ENCODE measurements at regions of chr12 and their contacts with region 1.

Region 1: DNA sequence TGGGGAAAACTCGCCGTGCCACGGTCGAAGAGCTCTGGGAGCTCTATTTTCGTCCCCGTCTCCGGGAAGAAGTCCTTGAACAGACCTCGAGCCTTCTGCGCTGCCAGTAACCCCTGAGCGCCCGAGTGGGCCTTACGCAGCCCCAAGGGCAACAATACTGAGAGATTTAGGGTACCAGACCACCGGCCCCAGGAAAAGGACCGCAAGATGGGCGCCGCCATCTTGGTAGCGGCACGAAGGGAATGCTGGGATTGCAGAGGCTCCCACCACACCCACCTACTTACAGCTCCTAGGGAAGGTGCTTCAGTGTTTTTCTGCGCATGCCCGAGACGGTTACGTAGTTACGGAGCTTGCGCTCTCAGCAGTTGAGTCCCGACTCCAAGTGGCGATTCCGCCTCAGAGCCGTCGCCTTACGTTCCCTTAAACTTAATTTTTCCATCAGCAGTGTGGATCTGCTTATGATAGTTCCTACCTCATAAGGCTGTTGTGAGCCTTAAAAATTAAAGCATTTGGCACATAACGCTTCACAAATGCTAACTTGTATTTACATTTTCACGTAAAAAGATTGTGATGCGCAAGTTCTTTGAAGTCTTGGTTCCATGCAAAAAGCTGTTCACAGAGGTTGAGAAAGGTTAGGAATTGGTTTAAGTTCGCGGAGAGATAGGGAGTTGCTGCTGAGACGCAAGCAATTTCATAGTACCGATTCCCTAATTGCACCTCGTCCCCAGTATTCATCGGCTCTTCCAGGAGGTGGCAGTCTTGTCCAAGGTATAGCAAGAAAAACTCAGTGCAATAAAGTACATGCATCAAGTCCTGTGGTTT is at the start of gene YARS2:
- DNase-seq: peak; percentile 83
- CTCF ChIP-seq: peak; percentile 82

Region 2: GRCh38 chr12:32455607-32456071 is 300.2 kb before region 1 on chr12:
- in situ Hi-C with region 1: loop called (anchors 10 kb)
- DNase-seq: peak; percentile 49
- CTCF ChIP-seq: peak; percentile 57

Region 3: DNA sequence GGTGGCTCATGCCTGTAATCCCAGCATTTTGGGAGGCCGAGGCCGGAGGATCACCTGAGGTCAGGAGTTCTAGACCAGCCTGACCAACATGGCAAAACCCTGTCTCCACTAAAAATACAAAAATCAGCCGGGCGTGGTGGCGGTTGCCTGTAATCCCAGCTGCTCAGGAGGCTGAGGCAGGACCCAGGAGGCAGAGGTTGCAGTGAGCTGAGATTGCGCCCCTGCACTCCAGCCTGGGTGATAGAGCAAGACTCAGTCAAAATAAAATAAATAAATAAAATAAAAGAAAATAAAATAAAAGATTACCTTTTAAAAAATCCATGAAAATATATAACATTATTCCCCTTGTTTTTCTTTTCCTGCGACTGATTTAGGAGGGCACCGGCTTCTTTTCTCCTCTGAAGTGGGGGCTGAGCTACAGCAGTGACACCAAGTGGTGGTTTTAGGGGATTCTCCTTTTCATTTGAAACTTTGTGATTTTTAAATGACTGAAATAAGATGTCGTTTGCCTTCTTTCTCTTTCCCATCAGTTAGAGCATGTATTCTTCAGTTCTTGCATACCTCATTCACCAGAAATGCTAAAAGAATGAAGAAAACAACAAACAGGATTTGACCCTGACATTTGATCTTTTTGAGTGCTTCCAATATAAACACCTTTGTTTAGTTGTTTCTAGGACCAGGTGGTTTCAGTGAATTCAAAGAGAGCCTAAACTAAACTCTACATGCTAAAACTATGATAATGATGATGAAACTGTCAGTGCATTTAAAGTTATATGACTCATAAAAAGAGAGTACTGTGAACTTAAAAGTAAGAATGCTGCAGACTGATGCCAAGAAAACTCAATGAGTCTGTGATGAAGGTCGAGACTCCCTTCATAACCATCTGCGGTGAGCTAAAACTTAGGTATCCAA is 163.3 kb after region 1 on chr12:
- in situ Hi-C with region 1: loop called (anchors 25 kb)
- DNase-seq: no peak
- CTCF ChIP-seq: peak; percentile 49

Region 4: GRCh38 chr12:34022079-34022830 is 1266.4 kb after region 1 on chr12 and contains the start of gene ALG10:
- in situ Hi-C with region 1: loop called (anchors 10 kb)
- DNase-seq: peak; percentile 73
- CTCF ChIP-seq: peak; percentile 60